ENCODE measurements at regions of chr3 and their contacts with region 1.

Region 1: GRCh38 chr3:195894780-195895607 is 13.4 kb downstream of the TNK2 start:
- DNase-seq: peak in 1 of 2 donors; percentile 54
- H3K4me3 ChIP-seq: peak overlapping the region; percentile 69 to 70
- H3K27ac ChIP-seq: peak overlapping the region; percentile 92 to 95
- H3K4me1 ChIP-seq: peaks cover 7 to 81% (median 59%) of the 10 kb centered on the region in 4 donors
- H3K27me3 ChIP-seq: no peaks in the 10 kb centered on the region
- CTCF ChIP-seq: peak; percentile 86 to 95

Region 2: DNA sequence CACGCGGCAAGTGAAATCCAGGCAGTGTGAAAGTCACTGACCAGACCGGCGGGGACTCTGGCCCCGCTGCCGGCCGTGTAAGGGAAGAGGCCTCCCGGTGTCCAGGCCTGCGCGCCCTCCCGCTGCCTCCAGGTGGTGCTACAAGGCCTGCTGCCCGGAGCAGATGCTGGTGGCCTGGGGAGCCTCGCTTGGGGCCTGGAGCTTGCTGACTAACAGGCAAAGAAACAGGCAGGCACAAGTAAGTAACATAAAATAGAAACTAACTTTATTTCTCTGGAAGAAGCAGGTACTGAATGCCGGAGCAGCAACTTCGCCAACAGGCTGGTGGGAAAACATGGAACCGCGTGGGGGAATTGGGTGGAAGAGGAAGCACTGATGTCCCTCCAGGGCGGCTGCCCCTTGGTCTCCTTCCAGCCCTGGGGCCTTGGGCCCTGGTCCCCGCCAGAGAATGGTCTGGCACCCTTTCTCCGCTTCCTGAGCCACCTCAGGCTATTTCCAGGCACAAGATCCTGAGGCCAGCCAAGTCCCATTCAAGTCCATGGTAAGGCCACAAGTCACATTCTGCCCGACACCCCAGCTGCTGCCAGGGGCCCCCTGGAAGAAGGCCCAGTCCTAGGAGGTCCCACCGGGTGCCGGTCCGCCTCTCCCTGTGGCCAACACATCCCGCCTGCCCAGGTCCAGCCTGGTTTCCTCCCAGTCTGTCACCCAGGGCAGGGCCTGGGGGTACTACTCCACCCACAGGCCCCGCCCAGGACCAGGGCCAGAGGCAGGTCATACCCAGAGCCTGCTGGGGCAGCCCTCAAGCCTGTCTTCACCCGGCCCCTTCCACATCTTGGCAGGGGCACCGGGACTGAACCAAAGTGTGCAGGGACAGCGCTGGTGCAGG is 31.6 kb before region 1 on chr3:
- intact Hi-C with region 1: loop called (anchors 2 kb)
- DNase-seq: peak; percentile 92 to 96
- H3K4me3 ChIP-seq: peak overlapping the region in 1 of 2 donors; percentile 8
- H3K27ac ChIP-seq: peak overlapping the region; percentile 81 to 82
- H3K4me1 ChIP-seq: peaks cover 0 to 20% (median 14%) of the 10 kb centered on the region in 4 donors
- H3K27me3 ChIP-seq: no peaks in the 10 kb centered on the region
- CTCF ChIP-seq: peak; percentile 97 to 98

Region 3: DNA sequence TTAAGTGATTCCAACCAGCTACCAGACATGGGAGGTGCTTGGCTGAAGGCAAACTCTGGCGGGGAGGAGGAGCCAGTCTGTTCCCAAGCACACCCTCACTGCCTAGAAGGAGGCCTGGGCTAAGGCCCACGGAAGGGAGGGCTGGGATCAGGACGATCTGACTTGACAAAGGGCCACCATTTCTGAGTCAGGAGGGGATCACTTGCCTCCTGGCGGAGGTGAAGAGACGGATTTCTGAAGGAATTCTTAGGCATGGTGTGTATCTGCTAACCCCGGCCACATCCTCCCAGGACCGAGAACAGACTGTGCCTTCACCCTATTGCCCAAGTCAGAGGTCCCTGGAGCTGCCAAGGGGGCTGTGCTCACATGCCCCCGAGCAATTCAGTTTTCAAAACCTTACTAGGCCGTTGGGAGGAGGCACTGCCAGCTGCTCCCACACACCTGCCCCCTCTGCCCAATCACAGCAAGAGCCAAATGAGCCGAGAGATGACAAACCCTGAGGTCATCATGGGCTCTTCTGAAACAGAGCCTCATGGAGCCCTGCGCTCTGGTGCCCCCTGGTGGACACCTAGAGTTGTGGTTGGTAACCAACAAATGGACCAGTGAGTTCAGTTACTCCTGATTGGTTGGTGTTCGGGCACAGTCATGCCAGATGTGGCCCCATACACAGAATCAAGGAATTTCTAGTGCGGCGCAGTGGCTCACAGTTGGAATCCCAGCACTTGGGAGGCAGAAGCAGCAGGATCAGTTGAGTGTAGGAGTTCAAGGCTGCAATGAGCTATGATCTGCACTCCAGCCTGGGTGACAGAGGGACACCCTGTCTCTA is 19.9 kb after region 1 on chr3:
- intact Hi-C with region 1: loop called (anchors 2 kb)
- DNase-seq: peak; percentile 89 to 97
- H3K4me3 ChIP-seq: peak overlapping the region in 1 of 2 donors; percentile 36
- H3K27ac ChIP-seq: peak overlapping the region; percentile 78 to 93
- H3K4me1 ChIP-seq: peaks cover 0 to 25% (median 21%) of the 10 kb centered on the region in 4 donors
- H3K27me3 ChIP-seq: peaks cover 0 to 3% of the 10 kb centered on the region in 2 donors
- CTCF ChIP-seq: peak; percentile 92 to 97

Measured in tibial artery (tissue), 4 donors.